Activated CD8-positive, alpha-beta T cell treated with anti-CD3 and anti-CD28 coated beads for 36 hours (primary cell): ENCODE measurements at regions of chr10 and their contacts with region 1.

Region 1: GRCh38 chr10:112307358-112308124 is 24.3 kb downstream of the TECTB start:
- DNase-seq: peak; percentile 52
- ATAC-seq: peak; percentile 77
- H3K4me3 Mint-ChIP-seq: no peak overlapping the region
- H3K27ac Mint-ChIP-seq: no peak overlapping the region
- H3K4me1 Mint-ChIP-seq: no peaks in the 10 kb centered on the region
- H3K27me3 Mint-ChIP-seq: peaks cover 11% of the 10 kb centered on the region
- CTCF ChIP-seq: peak; percentile 82

Region 2: GRCh38 chr10:112183329-112184051 is 124.1 kb before region 1 on chr10 and contains the start of gene GPAM:
- CTCF ChIA-PET with region 1: interaction called, 6 read pairs
- POLR2A ChIA-PET with region 1: no interaction called
- intact Hi-C with region 1: loop called (anchors 10 kb)
- DNase-seq: peak; percentile 98
- ATAC-seq: peak; percentile 96
- H3K4me3 Mint-ChIP-seq: peak within 1 kb of the TSS; percentile 96
- H3K27ac Mint-ChIP-seq: peak within 1 kb of the TSS; percentile 92
- H3K4me1 Mint-ChIP-seq: peaks cover 18% of the 10 kb centered on the region
- H3K27me3 Mint-ChIP-seq: no peaks in the 10 kb centered on the region
- CTCF ChIP-seq: no peak
- total RNA-seq, gene GPAM: 7.4 to 8.6 TPM